Cardiac septum (tissue), 1 donor: ENCODE measurements at regions of chr5 and their contacts with region 1.

Region 1: DNA sequence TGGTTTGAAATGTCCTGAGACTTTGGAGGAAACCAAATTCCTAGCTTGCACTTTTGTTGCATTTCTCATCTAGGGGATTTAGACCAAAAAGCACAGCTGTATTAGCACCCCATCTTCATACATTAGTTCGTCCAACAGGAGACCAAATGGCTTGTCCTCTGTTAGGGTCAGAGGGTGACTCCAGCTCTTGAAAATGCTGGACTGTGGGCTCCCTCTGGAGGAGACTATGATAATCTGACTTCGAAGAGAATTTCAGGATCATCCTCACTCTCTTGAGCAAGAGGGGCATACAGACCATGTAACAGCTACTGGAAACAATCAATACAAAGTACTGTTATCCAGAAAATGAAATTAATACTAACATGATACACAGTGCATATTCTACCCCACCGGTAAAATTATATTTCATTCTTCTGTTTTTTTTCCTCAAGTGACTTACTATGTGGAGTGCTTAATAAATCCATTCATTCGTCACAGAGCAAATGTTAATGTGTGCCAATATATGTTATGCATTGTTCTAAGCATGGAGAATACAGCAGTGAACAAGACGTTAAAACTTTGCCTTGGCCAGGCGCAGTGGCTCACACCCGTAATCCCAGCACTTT is 63.7 kb upstream of the PPP2CA start:
- DNase-seq: no peak

Region 2: GRCh38 chr5:134101686-134102439 is 187.7 kb before region 1 on chr5:
- intact Hi-C with region 1: loop called (anchors 5 kb)
- DNase-seq: peak; percentile 84

Region 3: DNA sequence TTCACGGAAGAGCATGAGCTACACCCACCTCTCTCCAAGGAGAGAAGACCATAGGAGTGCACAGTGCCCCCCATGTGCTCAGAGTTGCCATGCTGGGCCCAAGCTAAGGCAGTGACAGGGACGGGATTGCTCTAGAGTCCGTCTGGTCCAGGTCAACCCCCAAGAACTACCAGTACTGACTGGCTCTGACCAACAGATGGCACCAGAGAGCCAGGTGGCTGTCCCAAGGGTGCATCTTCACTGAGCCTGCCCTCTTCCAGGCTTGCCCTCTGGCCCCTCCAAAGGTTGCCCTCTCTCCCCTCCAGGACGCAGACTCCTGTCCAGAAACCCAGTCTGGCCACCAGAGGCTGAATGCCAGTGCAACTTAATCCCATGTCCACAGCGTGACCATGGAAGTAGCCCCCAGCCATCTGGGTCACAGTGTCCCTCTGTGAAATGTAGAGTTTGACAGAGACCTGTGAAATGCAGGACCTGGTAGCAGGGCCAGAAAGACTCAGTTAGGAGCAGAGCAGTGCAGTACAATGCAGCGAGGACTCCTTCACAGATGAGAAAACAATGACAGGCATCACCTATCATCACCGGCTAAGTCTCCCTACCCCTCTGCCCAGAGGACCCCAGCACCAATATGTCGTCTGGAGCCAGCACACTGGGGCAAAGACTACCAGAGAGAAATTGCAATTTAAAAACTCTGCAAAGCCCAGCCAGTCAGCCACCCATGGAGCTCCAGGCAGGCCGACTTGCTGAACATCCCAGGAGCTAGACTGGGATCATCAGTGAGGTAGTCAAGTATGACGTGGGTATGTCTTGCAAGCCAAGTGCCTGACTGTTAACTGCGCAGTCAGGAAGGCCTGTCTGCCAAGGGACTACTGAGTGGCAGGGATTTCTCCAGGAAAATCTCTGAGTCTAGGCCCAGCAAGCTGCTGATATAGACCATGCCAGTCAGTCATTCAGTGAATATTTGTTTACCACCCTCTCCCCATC is 105.2 kb before region 1 on chr5:
- intact Hi-C with region 1: loop called (anchors 1 kb)
- DNase-seq: peak; percentile 90

Region 4: GRCh38 chr5:134249469-134250379 is 39.9 kb before region 1 on chr5:
- intact Hi-C with region 1: loop called (anchors 5 kb)
- DNase-seq: no peak

Region 5: GRCh38 chr5:134489227-134489944 is 199.8 kb after region 1 on chr5:
- intact Hi-C with region 1: no loop called
- DNase-seq: peak; percentile 22